ENCODE measurements at regions of chr12 and their contacts with region 1.

Region 1: DNA sequence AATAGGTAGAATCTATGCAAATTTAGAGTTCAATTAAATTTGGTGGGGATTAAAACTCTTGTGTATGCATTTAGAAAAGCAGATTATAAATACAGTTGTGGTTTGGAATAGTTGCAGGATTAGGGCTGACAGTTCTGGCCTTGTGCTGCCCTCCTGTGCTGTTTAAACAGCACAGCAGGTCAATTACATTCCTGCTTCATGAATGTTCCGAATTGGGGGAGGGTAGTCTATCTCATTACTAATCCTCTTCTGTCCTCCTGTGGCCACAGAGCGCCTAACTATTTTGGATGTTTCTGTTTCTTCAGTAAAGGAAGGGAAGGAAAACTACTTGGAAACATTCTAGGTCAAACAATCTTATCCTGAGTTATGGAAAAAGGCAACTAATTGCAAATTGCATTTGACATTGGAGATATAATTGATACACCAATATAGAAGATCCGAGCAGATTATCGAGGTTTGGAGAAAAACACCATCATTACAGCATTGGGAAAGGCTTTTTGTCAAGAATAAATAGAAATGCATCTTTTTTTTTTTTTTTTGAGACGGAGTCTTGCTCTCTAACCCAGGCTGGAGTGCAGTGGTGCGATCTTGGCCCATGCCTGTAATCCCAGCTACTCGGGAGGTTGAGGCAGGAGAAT is 8.7 kb upstream of the GPR19 start:
- DNase-seq: no peak
- ATAC-seq: peak; percentile 89
- H3K4me3 ChIP-seq: no peak overlapping the region
- H3K27ac ChIP-seq: no peak overlapping the region
- H3K4me1 ChIP-seq: peaks cover 18% of the 10 kb centered on the region
- H3K27me3 ChIP-seq: no peaks in the 10 kb centered on the region
- CTCF ChIP-seq: peak; percentile 69 to 97 (median 93); a peak in 5 of 6 replicates
- EP300 ChIP-seq: no peak
- POLR2A ChIP-seq: no peak
- RAD21 ChIP-seq: peak; percentile 99

Region 2: GRCh38 chr12:12081836-12082497 is 622.7 kb before region 1 on chr12:
- CTCF ChIA-PET with region 1: interaction called, 3 read pairs
- POLR2A ChIA-PET with region 1: no interaction called
- RAD21 ChIA-PET with region 1: no interaction called
- SMC1A ChIA-PET with region 1: no interaction called
- in situ Hi-C with region 1: loop called (anchors 10 kb)
- intact Hi-C with region 1: loop called (anchors 5 kb)
- DNase-seq: peak; percentile 39
- ATAC-seq: peak; percentile 96
- H3K4me3 ChIP-seq: no peak overlapping the region
- H3K27ac ChIP-seq: no peak overlapping the region
- H3K4me1 ChIP-seq: no peaks in the 10 kb centered on the region
- H3K27me3 ChIP-seq: no peaks in the 10 kb centered on the region
- CTCF ChIP-seq: peak; percentile 33 to 54 (median 34); a peak in 4 of 6 replicates
- EP300 ChIP-seq: no peak
- POLR2A ChIP-seq: no peak
- RAD21 ChIP-seq: peak; percentile 80

Region 3: GRCh38 chr12:12442548-12443071 is 262.1 kb before region 1 on chr12:
- CTCF ChIA-PET with region 1: no interaction called
- POLR2A ChIA-PET with region 1: no interaction called
- RAD21 ChIA-PET with region 1: no interaction called
- SMC1A ChIA-PET with region 1: no interaction called
- in situ Hi-C with region 1: no loop called
- intact Hi-C with region 1: no loop called
- DNase-seq: no peak
- ATAC-seq: no peak
- H3K4me3 ChIP-seq: no peak overlapping the region
- H3K27ac ChIP-seq: no peak overlapping the region
- H3K4me1 ChIP-seq: no peaks in the 10 kb centered on the region
- H3K27me3 ChIP-seq: no peaks in the 10 kb centered on the region
- CTCF ChIP-seq: no peak
- EP300 ChIP-seq: no peak
- POLR2A ChIP-seq: no peak
- RAD21 ChIP-seq: no peak

Region 4: GRCh38 chr12:12645485-12645884 is 59.2 kb before region 1 on chr12:
- CTCF ChIA-PET with region 1: interaction called, 60 read pairs
- POLR2A ChIA-PET with region 1: interaction called, 3 read pairs
- RAD21 ChIA-PET with region 1: interaction called, 12 read pairs
- SMC1A ChIA-PET with region 1: interaction called, 22 read pairs
- in situ Hi-C with region 1: no loop called
- intact Hi-C with region 1: loop called (anchors 1 kb)
- DNase-seq: no peak
- ATAC-seq: peak; percentile 90
- H3K4me3 ChIP-seq: peak overlapping the region; percentile 14; the same call in 1 of the 2 replicates
- H3K27ac ChIP-seq: peak overlapping the region; percentile 76
- H3K4me1 ChIP-seq: peaks cover 20% of the 10 kb centered on the region
- H3K27me3 ChIP-seq: no peaks in the 10 kb centered on the region
- CTCF ChIP-seq: peak; percentile 38 to 70 (median 50)
- EP300 ChIP-seq: no peak
- POLR2A ChIP-seq: no peak
- RAD21 ChIP-seq: peak; percentile 59

Region 5: DNA sequence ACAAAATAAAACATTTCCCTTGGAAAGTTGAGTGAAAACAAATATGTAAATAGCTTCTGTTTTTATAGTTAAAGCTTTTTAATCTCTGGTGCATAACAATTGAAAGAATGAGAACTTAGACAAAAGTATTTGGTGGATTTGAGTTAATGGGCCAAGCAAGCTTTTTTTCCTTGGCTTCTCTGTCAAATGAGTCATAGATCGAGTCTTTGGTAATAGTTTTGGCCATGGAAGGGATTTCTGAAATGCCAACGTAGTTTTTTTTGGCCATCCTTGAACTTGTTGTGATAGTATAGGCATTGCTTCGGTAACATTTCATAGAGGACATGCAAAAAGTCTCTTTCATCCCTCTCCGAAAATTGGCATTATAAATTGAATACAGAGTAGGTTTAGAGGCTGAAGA is 43.6 kb before region 1 on chr12:
- CTCF ChIA-PET with region 1: interaction called, 7 read pairs
- POLR2A ChIA-PET with region 1: interaction called, 5 read pairs
- RAD21 ChIA-PET with region 1: interaction called, 12 read pairs
- SMC1A ChIA-PET with region 1: interaction called, 42 read pairs
- in situ Hi-C with region 1: no loop called
- intact Hi-C with region 1: loop called (anchors 2 kb)
- DNase-seq: no peak
- ATAC-seq: no peak
- H3K4me3 ChIP-seq: no peak overlapping the region
- H3K27ac ChIP-seq: no peak overlapping the region
- H3K4me1 ChIP-seq: peaks cover 4% of the 10 kb centered on the region; the same call in 1 of the 2 replicates
- H3K27me3 ChIP-seq: no peaks in the 10 kb centered on the region
- CTCF ChIP-seq: no peak
- EP300 ChIP-seq: no peak
- POLR2A ChIP-seq: no peak
- RAD21 ChIP-seq: no peak

Region 6: DNA sequence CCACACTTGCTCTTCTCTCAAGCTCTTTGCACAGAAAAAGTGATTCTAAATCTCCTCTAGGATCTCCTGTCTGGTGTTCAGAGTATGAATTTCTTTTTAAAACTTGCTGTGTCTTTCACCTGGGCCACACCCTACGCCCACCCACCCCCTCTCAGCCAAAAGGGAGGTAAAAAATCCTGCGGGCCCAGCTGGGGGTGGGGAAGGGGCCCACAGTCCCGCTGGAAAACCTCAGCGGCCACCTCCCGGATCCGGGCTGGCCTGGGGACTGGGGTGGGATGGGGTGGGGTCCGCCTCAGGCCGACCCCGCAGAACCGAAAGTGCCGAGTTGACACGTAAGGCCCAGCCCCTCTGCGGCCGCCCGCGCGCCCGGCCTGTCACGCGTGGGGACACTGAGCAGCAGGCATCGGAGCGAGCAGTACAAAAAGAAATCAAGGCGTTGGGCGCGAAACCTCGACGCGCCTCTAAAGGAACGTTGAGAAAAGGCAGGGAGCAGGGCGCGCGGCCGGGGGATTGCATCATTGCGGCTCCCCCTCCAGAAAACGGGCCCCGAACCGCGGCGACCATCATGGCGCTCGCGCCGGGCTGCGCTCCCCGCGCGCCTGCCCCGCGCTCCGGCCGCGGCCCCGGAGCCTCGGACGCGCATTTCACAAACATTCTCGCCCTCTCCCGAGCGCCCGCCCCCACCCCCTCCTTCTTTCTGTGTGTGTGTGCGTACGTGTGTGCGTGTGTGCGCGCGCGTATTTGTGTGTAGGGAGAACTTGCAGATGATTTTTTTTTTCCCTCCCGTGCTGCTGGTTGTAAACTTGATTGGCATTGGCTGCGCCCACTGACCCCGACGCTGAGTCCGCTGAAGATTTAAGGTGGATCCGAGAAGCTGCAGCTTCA is 20.2 kb after region 1 on chr12:
- CTCF ChIA-PET with region 1: interaction called, 4 read pairs
- POLR2A ChIA-PET with region 1: interaction called, 5 read pairs
- RAD21 ChIA-PET with region 1: interaction called, 3 read pairs
- SMC1A ChIA-PET with region 1: interaction called, 12 read pairs
- in situ Hi-C with region 1: no loop called
- intact Hi-C with region 1: no loop called
- DNase-seq: peak; percentile 94
- ATAC-seq: peak; percentile 55
- H3K4me3 ChIP-seq: peak overlapping the region; percentile 97
- H3K27ac ChIP-seq: peak overlapping the region; percentile 97
- H3K4me1 ChIP-seq: peaks cover 14% of the 10 kb centered on the region
- H3K27me3 ChIP-seq: no peaks in the 10 kb centered on the region
- CTCF ChIP-seq: no peak
- EP300 ChIP-seq: no peak
- POLR2A ChIP-seq: peak; percentile 76
- RAD21 ChIP-seq: no peak

Region 7: DNA sequence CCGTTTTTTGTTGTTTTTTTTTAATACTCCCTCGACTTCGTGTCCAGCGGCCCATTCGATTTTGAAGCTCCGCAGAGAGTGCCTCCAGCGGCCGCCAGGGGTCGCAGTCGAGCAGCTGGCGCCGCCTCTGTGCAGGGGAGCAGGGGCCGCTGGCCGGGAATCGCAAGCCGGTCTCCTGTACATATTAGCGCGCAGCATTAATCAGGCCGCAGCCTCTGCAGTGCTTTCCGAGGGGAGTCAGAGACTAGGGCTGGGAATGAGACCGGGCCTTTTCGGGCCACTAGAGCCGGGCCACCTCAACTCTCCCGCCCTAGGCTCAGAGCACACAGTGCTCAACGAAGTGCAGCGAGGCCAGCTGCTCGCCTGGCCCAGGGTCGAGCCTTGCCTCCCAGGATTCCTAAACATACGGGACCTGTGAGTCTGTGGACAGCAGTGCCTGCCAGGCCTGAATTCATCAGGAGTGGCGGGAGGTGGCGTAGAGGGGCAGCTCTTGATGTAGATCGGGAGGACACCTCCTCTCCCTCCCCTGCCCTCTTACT is 573.6 kb after region 1 on chr12:
- CTCF ChIA-PET with region 1: no interaction called
- POLR2A ChIA-PET with region 1: no interaction called
- RAD21 ChIA-PET with region 1: no interaction called
- SMC1A ChIA-PET with region 1: no interaction called
- in situ Hi-C with region 1: no loop called
- intact Hi-C with region 1: no loop called
- DNase-seq: no peak
- ATAC-seq: peak; percentile 93
- H3K4me3 ChIP-seq: no peak overlapping the region
- H3K27ac ChIP-seq: no peak overlapping the region
- H3K4me1 ChIP-seq: no peaks in the 10 kb centered on the region
- H3K27me3 ChIP-seq: peaks cover 0 to 7% of the 10 kb centered on the region in 2 experiments; a peak in 2 of 4 replicates
- CTCF ChIP-seq: peak; percentile 68 to 85 (median 75)
- EP300 ChIP-seq: no peak
- POLR2A ChIP-seq: no peak
- RAD21 ChIP-seq: peak; percentile 41